GM13976 (cell line): ENCODE measurements at regions of chr3 and their contacts with region 1.

Region 1: DNA sequence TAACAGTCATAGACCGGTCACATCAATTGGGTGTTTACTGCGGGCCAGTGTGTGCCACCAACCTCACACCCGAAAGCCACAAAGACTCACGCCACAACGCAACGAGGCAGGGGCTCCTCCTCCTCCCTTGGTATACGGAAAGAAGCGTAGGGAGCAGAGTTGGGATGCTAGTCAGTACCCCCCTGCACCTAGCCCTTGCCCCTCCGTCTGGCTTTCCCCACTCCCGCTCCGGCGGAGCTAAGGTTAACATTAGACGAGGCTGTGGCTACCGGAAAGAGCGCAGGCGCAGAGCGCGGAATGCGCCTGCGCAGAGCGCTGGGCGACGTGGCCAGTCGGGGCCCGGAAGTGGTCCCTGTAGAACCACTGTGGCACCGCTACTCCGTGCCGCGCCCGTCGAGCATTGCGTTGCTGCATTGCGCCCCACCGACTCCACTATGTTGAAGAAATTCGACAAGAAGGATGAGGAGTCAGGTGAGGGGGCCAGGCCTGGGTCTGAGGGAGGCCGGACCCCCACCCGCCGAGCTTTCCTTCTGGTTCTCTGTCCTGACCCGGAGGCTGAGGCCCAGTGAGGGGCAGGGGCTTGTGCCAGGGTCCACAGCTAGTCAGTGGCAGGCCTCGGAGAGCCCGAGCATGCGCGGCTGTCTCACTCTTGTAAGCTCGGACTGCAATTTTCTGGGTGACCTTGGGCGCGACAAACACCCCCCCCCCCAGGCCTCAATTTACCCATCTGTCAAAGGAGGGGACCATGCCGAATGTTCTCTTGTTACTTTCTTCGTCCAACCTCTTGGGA is at the start of gene COPG1:
- DNase-seq: peak; percentile 98
- CTCF ChIP-seq: no peak

Region 2: GRCh38 chr3:128969993-128970739 is 279.3 kb before region 1 on chr3:
- in situ Hi-C with region 1: loop called (anchors 10 kb)
- DNase-seq: peak; percentile 70
- CTCF ChIP-seq: peak; percentile 93

Region 3: DNA sequence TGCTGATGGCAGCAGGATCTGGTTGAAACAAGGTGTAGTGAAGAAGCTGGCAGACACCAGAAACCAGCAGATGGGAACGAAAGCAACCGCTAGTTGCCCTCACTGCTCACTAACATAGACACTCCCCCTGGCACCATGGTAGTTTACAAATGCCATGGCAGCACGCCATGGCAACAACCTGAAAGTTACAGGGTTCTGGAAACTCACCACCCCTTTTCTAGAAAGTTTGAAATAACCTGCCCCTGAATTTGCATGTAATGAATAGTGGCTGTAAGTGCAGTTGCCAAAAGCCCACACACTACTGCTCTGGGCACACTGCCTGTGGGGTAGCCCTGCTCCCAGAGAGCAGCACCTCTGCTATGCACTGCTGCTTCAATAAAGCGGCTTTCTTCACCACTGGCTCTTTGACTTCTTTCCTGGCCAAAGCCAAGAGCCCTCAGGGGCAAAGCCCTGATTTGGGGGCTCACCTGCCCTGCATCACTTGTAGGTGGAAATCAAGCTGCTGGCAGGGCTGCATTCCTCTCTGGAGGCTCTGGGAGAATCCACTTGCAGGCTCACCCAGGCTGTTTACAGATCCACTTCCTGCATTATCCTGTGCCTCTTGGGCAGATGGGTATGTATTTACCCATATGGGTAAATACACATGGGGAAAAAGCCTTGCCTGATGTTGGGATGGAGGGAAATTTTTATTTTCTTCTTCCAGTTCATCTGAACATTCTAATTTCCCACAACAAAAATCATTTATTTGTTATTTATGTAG is 190.8 kb before region 1 on chr3:
- in situ Hi-C with region 1: loop called (anchors 10 kb)
- DNase-seq: no peak
- CTCF ChIP-seq: no peak

Region 4: DNA sequence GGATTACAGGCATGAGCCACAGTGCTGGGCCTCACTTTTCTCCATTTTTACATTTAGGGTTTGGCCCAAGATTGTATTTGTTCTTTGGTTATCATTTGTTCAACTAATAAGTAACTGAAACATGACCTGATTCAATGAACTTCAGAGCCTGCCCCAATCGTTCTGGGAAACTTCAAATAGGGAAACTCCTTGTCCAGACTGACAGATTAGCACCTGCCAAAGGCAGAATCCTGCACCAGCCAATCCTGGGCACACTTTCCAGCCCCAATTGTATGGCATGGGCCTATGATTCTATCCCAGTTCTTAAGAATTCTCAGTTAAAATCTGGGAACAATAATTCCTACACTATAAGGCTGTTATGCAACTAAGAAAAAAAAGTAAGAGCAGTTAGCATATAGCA is 109.6 kb before region 1 on chr3:
- in situ Hi-C with region 1: no loop called
- DNase-seq: no peak
- CTCF ChIP-seq: no peak

Region 5: GRCh38 chr3:129413687-129414506 is 164.4 kb after region 1 on chr3:
- in situ Hi-C with region 1: no loop called
- DNase-seq: peak; percentile 71
- CTCF ChIP-seq: no peak